ENCODE measurements at regions of chr6 and their contacts with region 1.

Region 1: DNA sequence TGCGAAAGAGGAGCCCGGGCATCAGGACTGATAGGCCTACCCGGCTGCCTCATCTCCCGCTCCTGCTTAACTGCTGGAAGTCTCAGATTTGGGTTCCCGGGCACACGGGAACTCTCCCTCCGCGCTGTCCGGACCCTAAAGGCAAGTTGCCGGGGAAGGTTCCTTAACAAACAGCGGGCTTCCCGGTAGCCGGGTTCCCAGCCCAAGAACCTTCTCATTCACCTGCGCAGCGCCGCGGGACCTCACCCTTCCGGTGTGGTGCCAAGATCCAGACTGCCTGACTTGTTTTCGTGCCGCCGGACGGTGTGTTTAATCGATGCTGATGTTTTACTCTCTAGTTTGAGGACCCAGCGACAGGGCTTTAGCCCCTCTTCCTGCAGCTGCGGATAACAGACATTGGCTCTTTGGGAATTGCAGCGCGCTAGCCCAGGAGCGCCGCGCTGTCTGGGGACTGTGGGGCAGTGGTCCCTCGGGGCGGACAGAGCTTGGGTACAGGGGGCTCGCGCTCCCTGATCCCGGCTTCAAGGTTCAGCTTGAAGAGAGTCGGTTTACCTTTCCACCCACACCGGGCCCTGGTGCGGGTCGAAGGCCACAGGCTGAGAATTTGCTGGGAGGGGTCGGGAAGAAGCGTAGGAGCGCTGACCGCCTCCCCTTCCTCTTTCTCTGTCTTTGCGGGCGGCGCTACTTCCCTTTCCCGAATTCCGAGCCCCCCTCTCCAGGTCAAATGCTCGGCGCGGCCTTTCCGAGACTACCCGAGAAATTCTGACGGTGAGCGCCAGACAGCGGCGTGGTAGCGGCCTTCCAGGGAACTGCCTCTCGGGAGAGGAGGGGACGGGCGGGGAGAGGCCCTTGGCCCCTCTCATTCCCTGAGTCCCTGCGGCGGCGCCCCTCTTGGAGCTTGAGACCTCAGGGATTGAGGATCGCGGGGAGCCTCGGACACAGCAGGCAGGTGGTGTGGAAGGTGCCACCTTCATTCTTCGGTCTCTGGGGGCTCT is 17.2 kb downstream of the ABT1 start:
- DNase-seq: peak in 1 of 5 donors; percentile 50
- H3K4me3 ChIP-seq: peak overlapping the region; percentile 54
- H3K4me3 Mint-ChIP-seq: peak overlapping the region; percentile 70 to 87 (median 74)
- H3K27ac ChIP-seq: no peak overlapping the region
- H3K27ac Mint-ChIP-seq: peak overlapping the region in 3 of 8 donors; percentile 3 to 57 (median 47)
- H3K4me1 ChIP-seq: peaks cover 14% of the 10 kb centered on the region
- H3K4me1 Mint-ChIP-seq: peaks cover 14 to 19% (median 17%) of the 10 kb centered on the region in 3 donors
- H3K27me3 ChIP-seq: peaks cover 20% of the 10 kb centered on the region
- H3K27me3 Mint-ChIP-seq: peaks cover 39 to 57% of the 10 kb centered on the region in 2 donors

Region 2: DNA sequence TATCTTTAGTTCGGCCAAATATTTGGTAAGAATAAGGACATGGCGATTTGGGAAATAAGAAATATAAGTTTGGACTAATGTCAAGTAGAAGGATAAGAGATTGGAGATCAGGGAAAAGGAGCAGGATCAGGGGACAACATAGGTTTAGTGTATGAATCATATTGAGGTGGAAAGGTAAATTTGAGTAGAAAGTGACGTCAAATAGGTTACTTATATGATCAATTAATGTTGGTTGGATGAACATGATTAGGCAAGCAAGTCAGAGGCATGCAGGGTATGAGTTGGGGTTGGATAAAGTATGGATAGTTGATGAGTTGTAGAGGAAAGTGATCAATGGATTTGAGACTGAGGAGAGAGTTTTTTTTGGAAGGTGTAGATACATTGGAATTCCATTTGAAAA is 48.7 kb after region 1 on chr6:
- CTCF ChIA-PET with region 1: no interaction called
- POLR2A ChIA-PET with region 1: no interaction called
- DNase-seq: no peak
- H3K4me3 ChIP-seq: no peak overlapping the region
- H3K4me3 Mint-ChIP-seq: no peak overlapping the region
- H3K27ac ChIP-seq: no peak overlapping the region
- H3K27ac Mint-ChIP-seq: peak overlapping the region in 1 of 8 donors; percentile 1
- H3K4me1 ChIP-seq: peaks cover 13% of the 10 kb centered on the region
- H3K4me1 Mint-ChIP-seq: peaks cover 11 to 21% (median 20%) of the 10 kb centered on the region in 3 donors
- H3K27me3 ChIP-seq: no peaks in the 10 kb centered on the region
- H3K27me3 Mint-ChIP-seq: peaks cover 2 to 52% of the 10 kb centered on the region in 2 donors

Region 3: GRCh38 chr6:27132532-27133280 is 518.7 kb after region 1 on chr6:
- CTCF ChIA-PET with region 1: no interaction called
- POLR2A ChIA-PET with region 1: interaction called, 10 read pairs
- DNase-seq: peak; percentile 77 to 98 (median 96)
- H3K4me3 ChIP-seq: peak overlapping the region; percentile 75
- H3K4me3 Mint-ChIP-seq: no peak overlapping the region
- H3K27ac ChIP-seq: peak overlapping the region; percentile 89
- H3K27ac Mint-ChIP-seq: no peak overlapping the region
- H3K4me1 ChIP-seq: peaks cover 20% of the 10 kb centered on the region
- H3K4me1 Mint-ChIP-seq: peaks cover 7 to 21% (median 16%) of the 10 kb centered on the region in 3 donors
- H3K27me3 ChIP-seq: no peaks in the 10 kb centered on the region
- H3K27me3 Mint-ChIP-seq: peaks cover 0 to 2% of the 10 kb centered on the region in 2 donors